HepG2 (cell line): ENCODE measurements at regions of chr2 and their contacts with region 1.

Region 1: DNA sequence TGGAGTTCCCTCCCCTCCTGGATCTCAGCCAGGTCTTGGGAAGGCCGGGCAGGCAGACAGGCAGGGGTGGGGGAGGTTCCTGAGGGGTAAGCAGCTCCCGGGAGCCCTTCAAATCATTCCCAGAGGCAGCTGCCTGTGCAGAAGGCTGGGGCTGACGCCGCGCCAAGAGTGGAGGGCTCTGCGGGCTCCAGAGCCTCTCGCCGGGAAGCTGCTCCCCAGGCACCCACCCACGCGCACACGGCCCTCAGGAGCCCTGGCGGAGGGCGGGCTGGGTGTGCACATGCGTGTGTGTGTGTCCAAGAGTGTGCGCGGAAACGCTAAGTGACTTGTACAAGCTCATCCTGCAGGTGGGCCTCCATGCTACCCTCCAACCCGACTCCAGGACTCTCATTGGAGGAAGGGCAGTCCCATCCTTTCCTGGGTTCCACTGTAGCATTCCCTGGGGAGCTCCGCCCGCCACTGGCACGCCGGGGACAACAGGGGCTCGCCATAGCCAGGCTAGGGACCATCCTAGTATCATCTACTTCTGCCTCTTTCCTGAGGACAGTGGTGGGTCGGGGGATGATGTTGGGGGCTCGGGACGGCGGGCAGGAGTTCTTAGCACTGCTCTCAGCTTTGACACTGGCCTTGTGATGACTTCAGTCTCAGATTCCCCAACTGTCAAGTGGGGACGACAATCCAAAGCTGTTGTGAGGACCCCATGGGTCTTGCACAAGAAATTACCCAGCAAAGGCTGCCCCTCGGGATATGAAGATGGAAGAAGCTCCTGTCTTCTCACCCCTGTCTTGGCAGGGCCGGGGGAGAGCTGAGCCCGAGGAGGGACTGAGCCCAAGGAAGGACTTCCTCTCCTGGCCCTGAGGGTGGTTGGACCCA is 50.3 kb downstream of the INHBB start:
- DNase-seq: peak; percentile 44
- ATAC-seq: no peak
- H3K4me3 ChIP-seq: no peak overlapping the region
- H3K27ac ChIP-seq: no peak overlapping the region
- H3K4me1 ChIP-seq: peaks cover 60% of the 10 kb centered on the region
- H3K27me3 ChIP-seq: peaks cover 0 to 3% of the 10 kb centered on the region in 2 experiments; a peak in 2 of 5 replicates
- CTCF ChIP-seq: no peak
- EP300 ChIP-seq: no peak
- POLR2A ChIP-seq: no peak
- RAD21 ChIP-seq: no peak

Region 2: GRCh38 chr2:120680136-120680761 is 284.0 kb after region 1 on chr2:
- CTCF ChIA-PET with region 1: no interaction called
- POLR2A ChIA-PET with region 1: no interaction called
- in situ Hi-C with region 1: no loop called
- intact Hi-C with region 1: loop called (anchors 5 kb)
- DNase-seq: peak; percentile 82
- ATAC-seq: peak; percentile 85
- H3K4me3 ChIP-seq: no peak overlapping the region
- H3K27ac ChIP-seq: no peak overlapping the region
- H3K4me1 ChIP-seq: peaks cover 5% of the 10 kb centered on the region; the same call in 1 of the 2 replicates
- H3K27me3 ChIP-seq: peaks cover 2 to 63% of the 10 kb centered on the region in 2 experiments; a peak in 3 of 5 replicates
- CTCF ChIP-seq: peak; percentile 93
- EP300 ChIP-seq: no peak
- POLR2A ChIP-seq: no peak
- RAD21 ChIP-seq: peak; percentile 88